ENCODE measurements at regions of chr19 and their contacts with region 1.

Region 1: GRCh38 chr19:51338563-51339312 is 3.2 kb downstream of the VSIG10L start:
- DNase-seq: peak; percentile 83
- H3K4me3 Mint-ChIP-seq: peak overlapping the region; percentile 95
- H3K27ac Mint-ChIP-seq: peak overlapping the region; percentile 89
- H3K4me1 Mint-ChIP-seq: peaks cover 23% of the 10 kb centered on the region
- H3K27me3 Mint-ChIP-seq: peaks cover 2% of the 10 kb centered on the region

Region 2: DNA sequence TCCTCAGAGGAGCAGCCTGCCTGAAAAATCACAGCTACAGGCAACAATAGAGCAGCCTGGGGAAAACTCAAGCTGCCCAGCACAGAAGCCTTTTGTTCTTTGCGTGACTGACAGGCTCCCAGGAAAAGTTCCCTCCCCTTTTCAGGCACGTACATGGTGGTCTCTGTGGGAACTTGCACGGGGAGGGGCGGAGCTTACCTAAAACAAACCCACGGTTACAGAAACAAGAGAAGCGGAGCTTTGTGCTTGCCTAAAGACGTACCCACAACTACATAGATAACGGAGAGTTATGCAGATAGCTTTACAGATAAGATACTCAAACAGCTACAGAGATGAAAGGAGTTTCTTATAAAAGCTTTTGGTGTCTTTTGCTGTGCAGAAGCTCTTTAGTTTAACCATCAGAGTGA is 16.0 kb after region 1 on chr19:
- intact Hi-C with region 1: loop called (anchors 2 kb)
- DNase-seq: peak; percentile 65
- H3K4me3 Mint-ChIP-seq: peak overlapping the region; percentile 65
- H3K27ac Mint-ChIP-seq: peak overlapping the region; percentile 94
- H3K4me1 Mint-ChIP-seq: peaks cover 40% of the 10 kb centered on the region
- H3K27me3 Mint-ChIP-seq: no peaks in the 10 kb centered on the region

Region 3: GRCh38 chr19:51367565-51368365 is 29.0 kb after region 1 on chr19:
- intact Hi-C with region 1: loop called (anchors 1 kb)
- DNase-seq: peak; percentile 98
- H3K4me3 Mint-ChIP-seq: peak overlapping the region; percentile 98
- H3K27ac Mint-ChIP-seq: peak overlapping the region; percentile 95
- H3K4me1 Mint-ChIP-seq: peaks cover 49% of the 10 kb centered on the region
- H3K27me3 Mint-ChIP-seq: no peaks in the 10 kb centered on the region

Region 4: GRCh38 chr19:51407511-51408131 is 68.9 kb after region 1 on chr19:
- intact Hi-C with region 1: loop called (anchors 2 kb)
- DNase-seq: no peak
- H3K4me3 Mint-ChIP-seq: no peak overlapping the region
- H3K27ac Mint-ChIP-seq: no peak overlapping the region
- H3K4me1 Mint-ChIP-seq: peaks cover 10% of the 10 kb centered on the region
- H3K27me3 Mint-ChIP-seq: no peaks in the 10 kb centered on the region

Region 5: DNA sequence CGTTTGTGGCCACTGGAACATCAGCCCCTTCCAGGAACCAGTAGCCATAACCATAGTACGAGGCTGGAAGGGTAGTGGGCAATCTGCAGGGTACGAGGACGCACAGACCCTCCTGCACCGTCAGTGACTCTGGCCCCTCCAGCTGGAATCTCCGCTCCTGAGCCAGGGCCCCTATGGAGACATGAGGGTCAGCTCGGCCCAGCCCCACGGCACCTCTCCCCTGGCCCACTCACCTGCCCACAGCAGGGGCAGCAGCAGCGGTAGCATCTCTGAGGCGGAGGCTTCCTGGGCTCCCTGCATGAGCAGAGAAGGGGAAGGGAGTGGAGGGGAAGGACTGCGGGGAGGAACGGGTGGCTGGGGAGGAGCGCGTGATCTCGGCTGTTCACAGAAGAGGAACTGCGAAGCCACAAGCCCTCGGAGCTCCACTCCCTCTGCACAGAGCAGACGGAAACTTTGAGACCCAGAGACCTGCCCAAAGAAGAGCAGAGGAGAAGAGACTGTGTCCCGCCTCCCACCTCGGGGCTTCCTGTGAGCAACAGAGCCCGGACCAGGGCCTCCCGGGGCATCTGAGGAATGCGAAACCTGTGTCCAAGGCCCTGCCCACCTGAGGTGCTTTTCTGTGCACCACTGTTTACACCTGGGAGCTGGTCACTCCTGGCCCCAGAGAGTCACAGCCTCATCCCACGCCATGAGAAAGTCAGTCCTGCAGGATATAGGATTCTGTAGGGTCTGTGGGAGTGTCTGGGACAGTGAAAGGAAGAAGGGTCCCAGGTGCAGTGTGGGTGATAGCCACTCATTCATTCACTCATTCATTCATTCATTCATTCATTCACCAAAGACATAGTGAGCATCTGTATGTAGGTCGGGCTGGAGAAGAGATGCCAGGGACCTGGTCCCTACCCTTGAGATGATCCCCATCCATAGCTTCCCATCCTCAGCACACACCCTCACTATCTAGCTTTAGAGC is 192.9 kb after region 1 on chr19 and contains the start of gene SIGLEC6:
- intact Hi-C with region 1: no loop called
- DNase-seq: peak; percentile 35
- H3K4me3 Mint-ChIP-seq: no peak within 1 kb of the TSS
- H3K27ac Mint-ChIP-seq: peak within 1 kb of the TSS; percentile 24
- H3K4me1 Mint-ChIP-seq: peaks cover 10% of the 10 kb centered on the region
- H3K27me3 Mint-ChIP-seq: peaks cover 54% of the 10 kb centered on the region
- total RNA-seq, gene SIGLEC6: 1.2 and 1.7 TPM in 2 replicates

Region 6: GRCh38 chr19:51660975-51661600 is 322.4 kb after region 1 on chr19:
- intact Hi-C with region 1: loop called (anchors 1 kb)
- DNase-seq: peak; percentile 26
- H3K4me3 Mint-ChIP-seq: no peak overlapping the region
- H3K27ac Mint-ChIP-seq: no peak overlapping the region
- H3K4me1 Mint-ChIP-seq: peaks cover 5% of the 10 kb centered on the region
- H3K27me3 Mint-ChIP-seq: peaks cover 21% of the 10 kb centered on the region